ENCODE measurements at regions of chr4 and their contacts with region 1.

Region 1: GRCh38 chr4:124275-125081 is at the start of gene ZNF718:
- DNase-seq: peak; percentile 92 to 94
- H3K4me3 ChIP-seq: peak within 1 kb of the TSS; percentile 78 to 98 (median 94)
- H3K27ac ChIP-seq: peak within 1 kb of the TSS; percentile 92
- H3K4me1 ChIP-seq: peaks cover 0 to 2% (median 0%) of the 10 kb centered on the region in 4 experiments; a peak in 3 of 7 replicates
- H3K27me3 ChIP-seq: no peaks in the 10 kb centered on the region
- CTCF ChIP-seq: no peak
- EP300 ChIP-seq: no peak
- POLR2A ChIP-seq: peak; percentile 99
- RAD21 ChIP-seq: no peak
- total RNA-seq, gene ZNF718: 19.4 and 19.5 TPM in 2 replicates

Region 2: GRCh38 chr4:99863-100262 is 24.6 kb before region 1 on chr4:
- CTCF ChIA-PET with region 1: interaction called, 3 read pairs
- POLR2A ChIA-PET with region 1: interaction called, 11 read pairs
- DNase-seq: no peak
- H3K4me3 ChIP-seq: no peak overlapping the region
- H3K27ac ChIP-seq: no peak overlapping the region
- H3K4me1 ChIP-seq: 0 out of 7 replicates have a peak, but pooled peaks cover 0 to 2% (median 0%) of the 10 kb centered on the region in 4 experiments
- H3K27me3 ChIP-seq: peaks cover 0 to 2% (median 0%) of the 10 kb centered on the region in 4 experiments; a peak in 1 of 7 replicates
- CTCF ChIP-seq: no peak
- EP300 ChIP-seq: no peak
- POLR2A ChIP-seq: no peak
- RAD21 ChIP-seq: no peak

Region 3: DNA sequence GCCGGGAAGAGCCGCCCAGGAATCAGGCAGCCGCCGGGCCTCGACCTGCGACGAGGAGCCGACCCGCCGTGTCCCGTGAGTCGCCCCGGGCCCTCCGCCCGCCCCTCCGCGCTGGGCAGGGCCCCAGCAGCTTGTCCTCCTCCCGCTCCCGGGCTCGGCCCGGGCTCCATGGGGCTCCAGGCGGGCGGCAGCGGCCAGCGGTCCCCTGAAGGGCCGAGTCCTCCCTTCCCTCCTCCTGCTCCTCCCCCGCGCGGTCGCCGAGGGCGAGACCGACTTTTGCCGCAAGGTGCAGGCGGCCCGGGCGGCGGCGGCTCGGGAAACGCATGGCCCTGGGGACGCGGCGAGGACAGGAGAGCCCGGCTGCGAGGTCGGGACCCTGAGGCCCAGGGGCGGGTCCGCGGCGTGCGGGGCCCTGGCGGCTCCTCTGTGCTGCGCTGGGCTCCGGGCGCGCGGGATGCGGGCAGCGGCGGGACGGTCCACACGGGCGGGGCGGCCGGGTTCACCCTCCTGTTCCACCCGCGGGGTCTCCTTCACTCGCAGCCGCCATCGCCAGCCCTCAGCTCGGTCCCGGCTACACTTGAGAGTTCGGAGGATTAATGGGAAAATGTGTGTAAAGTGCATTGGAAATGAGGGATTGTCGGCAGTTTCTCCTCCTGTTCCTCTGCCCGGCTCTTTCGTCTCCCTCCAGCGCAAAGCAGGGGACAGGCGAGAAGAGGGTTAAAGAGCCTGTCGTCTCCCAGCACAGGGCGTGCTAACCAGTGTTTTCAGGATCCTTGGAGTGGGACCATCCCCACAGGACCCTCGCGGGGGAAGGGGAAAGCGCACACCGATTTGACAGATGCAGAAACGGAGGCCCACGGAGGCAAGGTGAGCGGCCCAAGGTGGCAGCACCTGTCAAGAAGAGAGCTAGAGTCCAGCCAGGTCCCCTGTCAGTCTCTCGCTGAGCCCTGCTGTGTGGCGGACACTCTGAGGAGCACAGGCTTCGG is 16.7 kb before region 1 on chr4:
- CTCF ChIA-PET with region 1: interaction called, 4 read pairs
- POLR2A ChIA-PET with region 1: interaction called, 42 read pairs
- DNase-seq: peak in 1 of 2 experiments; percentile 60
- H3K4me3 ChIP-seq: peak overlapping the region; percentile 16 to 65 (median 26); a peak in 6 of 8 replicates
- H3K27ac ChIP-seq: no peak overlapping the region
- H3K4me1 ChIP-seq: peaks cover 0 to 2% (median under 1%) of the 10 kb centered on the region in 4 experiments; a peak in 2 of 7 replicates
- H3K27me3 ChIP-seq: peaks cover 40 to 61% (median 52%) of the 10 kb centered on the region in 4 experiments
- CTCF ChIP-seq: no peak
- EP300 ChIP-seq: no peak
- POLR2A ChIP-seq: no peak
- RAD21 ChIP-seq: 0 out of 4 replicates have a peak, but pooled peaks of 1 of the 2 experiments have one; percentile 9

Region 4: DNA sequence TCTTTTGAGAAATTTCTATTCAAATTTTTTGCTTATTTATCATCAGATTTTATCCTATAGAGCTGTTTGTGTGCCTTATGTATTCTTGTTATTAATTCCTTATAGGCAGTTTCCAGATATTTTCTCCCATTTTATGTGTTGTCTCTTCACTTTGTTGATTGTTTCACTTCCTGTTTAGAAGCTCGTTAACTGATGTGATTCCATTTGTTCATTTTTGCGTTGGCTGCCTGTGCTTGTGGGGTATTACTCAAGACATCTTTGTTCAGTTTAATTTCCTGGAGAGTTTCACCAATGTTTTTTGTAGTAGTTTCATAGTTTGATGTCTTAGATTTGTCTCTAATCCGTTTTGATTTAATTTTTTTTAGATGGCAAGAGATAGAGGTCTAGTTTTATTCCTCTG is 14.5 kb after region 1 on chr4:
- CTCF ChIA-PET with region 1: interaction called, 4 read pairs
- POLR2A ChIA-PET with region 1: interaction called, 47 read pairs
- DNase-seq: no peak
- H3K4me3 ChIP-seq: no peak overlapping the region
- H3K27ac ChIP-seq: no peak overlapping the region
- H3K4me1 ChIP-seq: no peaks in the 10 kb centered on the region
- H3K27me3 ChIP-seq: no peaks in the 10 kb centered on the region
- CTCF ChIP-seq: no peak
- EP300 ChIP-seq: no peak
- POLR2A ChIP-seq: no peak
- RAD21 ChIP-seq: no peak